Activated CD4-positive, alpha-beta T cell treated with anti-CD3 and anti-CD28 coated beads for 36 hours (primary cell): ENCODE measurements at regions of chr21 and their contacts with region 1.

Region 1: DNA sequence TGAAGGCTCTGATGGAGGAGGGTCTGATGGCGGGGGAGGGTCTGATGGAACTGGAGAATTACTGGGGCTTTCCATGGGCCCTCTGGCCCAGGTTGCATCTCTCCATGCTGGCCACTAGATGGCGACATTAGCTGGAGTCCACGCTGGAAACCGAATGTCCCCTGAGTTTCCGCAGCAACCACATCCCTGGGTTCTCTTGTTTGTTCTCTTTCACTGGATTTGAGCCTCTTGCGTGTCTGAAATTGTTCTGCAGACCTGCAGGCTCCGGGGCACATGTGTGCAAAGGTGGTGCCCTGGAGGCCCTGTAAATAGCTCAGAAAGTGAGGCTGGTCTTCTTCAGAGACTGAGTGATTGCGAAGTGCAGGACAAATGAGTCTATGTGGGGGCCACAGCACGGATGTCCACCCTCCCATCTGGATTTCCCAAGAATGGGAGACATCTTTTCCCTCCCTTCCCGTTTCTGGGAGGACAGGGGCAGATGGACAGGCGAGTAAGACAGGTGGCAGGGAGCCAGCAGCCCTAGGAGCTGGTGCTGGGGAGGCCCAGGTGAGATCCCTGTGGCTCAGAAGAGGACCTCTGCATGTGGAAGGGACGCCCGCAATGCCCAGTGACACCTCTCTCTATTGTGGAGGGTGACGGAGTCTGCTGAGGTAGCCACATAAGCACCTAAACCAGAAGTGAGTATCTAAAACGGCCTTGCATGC is 73.2 kb upstream of the ABCG1 start:
- DNase-seq: peak; percentile 80
- ATAC-seq: peak; percentile 81
- H3K4me3 Mint-ChIP-seq: no peak overlapping the region
- H3K27ac Mint-ChIP-seq: peak overlapping the region; percentile 38
- H3K4me1 Mint-ChIP-seq: peaks cover 10% of the 10 kb centered on the region
- H3K27me3 Mint-ChIP-seq: peaks cover 2% of the 10 kb centered on the region

Region 2: DNA sequence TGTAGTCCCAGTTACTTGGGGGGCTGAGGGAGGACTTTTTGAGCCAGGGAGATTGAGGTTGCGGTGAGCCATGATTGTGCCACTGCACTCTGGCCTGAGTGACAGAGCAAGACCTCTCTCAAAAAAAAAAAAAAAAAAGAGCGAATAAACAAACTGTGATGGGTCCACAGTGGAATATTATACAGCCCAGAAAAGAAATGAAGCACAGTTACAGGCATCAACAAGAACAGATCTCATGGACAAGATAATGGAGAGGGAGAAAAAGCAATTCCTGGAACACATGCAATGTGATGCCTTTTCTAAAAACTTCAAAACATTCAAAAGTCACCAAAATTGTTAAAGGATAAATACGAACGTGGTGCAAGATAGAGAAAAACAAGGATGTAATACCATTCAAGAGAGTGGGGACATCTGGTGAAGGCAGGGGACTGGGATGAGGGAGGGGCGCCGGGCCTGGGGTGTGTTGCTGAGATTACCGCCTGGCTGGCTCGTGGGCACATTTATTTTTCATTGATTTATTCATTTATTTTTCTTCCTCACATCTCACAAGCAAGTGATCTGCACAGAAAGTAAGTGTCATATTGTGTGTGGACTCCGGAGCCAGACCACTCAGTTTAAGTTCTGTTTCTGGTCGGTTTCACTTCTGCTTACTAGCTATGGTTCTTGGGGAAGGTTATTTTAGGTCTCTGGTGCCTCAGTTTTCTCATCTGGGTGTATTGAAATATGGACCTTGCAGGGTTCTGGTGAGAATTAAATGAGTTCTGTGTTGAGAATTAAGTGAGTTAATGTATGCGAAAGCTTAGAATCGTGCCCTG is 103.3 kb after region 1 on chr21:
- CTCF ChIA-PET with region 1: interaction called, 10 read pairs
- POLR2A ChIA-PET with region 1: no interaction called
- intact Hi-C with region 1: no loop called
- DNase-seq: no peak
- ATAC-seq: no peak
- H3K4me3 Mint-ChIP-seq: no peak overlapping the region
- H3K27ac Mint-ChIP-seq: no peak overlapping the region
- H3K4me1 Mint-ChIP-seq: peaks cover 17% of the 10 kb centered on the region
- H3K27me3 Mint-ChIP-seq: no peaks in the 10 kb centered on the region

Region 3: GRCh38 chr21:42266971-42267556 is 121.3 kb after region 1 on chr21:
- CTCF ChIA-PET with region 1: interaction called, 13 read pairs
- POLR2A ChIA-PET with region 1: no interaction called
- intact Hi-C with region 1: no loop called
- DNase-seq: no peak
- ATAC-seq: no peak
- H3K4me3 Mint-ChIP-seq: no peak overlapping the region
- H3K27ac Mint-ChIP-seq: peak overlapping the region; percentile 52
- H3K4me1 Mint-ChIP-seq: peaks cover 31% of the 10 kb centered on the region
- H3K27me3 Mint-ChIP-seq: no peaks in the 10 kb centered on the region

Region 4: DNA sequence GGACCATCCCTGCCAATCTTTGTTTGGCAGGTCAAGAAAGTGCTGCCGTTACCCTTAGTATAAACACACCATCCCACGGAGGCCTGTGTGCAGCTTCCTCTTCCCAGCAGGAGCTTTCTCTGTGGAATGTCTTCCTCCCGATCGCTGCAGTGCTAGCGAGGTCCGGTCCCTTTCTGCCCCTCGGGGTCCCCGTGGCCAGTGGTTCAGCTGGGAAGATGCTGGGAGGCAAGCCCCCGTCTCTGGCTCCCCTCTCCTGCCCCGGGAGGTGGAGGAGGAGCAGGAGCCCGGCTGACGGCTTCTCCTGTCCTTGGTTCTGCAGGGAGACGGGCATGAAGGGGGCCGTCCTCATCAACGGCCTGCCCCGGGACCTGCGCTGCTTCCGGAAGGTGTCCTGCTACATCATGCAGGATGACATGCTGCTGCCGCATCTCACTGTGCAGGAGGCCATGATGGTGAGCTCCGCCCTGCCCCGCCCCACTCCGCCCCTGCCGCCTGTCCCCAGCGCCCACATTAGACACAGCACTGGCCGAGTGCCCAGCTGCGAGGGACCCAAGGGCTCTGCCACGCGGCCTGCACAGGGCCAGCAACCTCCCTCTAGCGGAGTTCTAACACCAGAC is 127.4 kb after region 1 on chr21:
- CTCF ChIA-PET with region 1: interaction called, 13 read pairs
- POLR2A ChIA-PET with region 1: no interaction called
- intact Hi-C with region 1: no loop called
- DNase-seq: no peak
- ATAC-seq: no peak
- H3K4me3 Mint-ChIP-seq: no peak overlapping the region
- H3K27ac Mint-ChIP-seq: no peak overlapping the region
- H3K4me1 Mint-ChIP-seq: peaks cover 13% of the 10 kb centered on the region
- H3K27me3 Mint-ChIP-seq: no peaks in the 10 kb centered on the region

Region 5: GRCh38 chr21:42289926-42290325 is 144.2 kb after region 1 on chr21:
- CTCF ChIA-PET with region 1: interaction called, 13 read pairs
- POLR2A ChIA-PET with region 1: no interaction called
- intact Hi-C with region 1: no loop called
- DNase-seq: no peak
- ATAC-seq: no peak
- H3K4me3 Mint-ChIP-seq: no peak overlapping the region
- H3K27ac Mint-ChIP-seq: no peak overlapping the region
- H3K4me1 Mint-ChIP-seq: no peaks in the 10 kb centered on the region
- H3K27me3 Mint-ChIP-seq: no peaks in the 10 kb centered on the region

Region 6: DNA sequence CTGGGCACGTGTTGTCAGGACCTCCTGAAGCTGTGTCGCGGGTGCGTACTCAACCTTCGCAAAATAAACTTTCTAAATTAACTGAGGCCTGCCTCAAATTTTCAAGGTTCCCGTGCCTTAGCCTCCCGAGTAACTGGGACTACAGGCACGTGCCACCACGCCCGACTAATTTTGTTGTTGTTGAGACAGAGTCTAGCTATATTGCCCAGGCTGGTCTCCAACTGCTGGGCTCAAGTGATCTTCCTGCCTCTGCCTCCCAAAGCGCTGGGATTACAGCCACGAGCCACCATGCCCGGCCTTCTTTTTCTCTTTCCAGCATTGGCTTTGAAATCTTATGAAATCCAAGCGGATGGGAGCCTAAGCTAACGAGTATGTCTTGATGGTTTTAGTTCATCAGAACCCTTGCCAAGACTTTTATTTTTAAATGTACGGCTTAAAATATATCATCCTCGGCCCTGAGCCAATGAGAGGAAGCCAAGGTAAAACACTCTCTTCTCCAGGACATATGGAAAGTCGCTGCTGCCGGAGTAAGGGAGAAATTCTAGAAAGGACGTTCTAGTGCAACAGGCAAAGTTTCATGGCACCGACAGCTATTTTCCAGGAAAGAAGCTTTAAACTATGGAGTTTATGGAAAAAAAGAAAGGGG is 792.4 kb after region 1 on chr21:
- CTCF ChIA-PET with region 1: no interaction called
- POLR2A ChIA-PET with region 1: no interaction called
- intact Hi-C with region 1: no loop called
- DNase-seq: no peak
- ATAC-seq: no peak
- H3K4me3 Mint-ChIP-seq: no peak overlapping the region
- H3K27ac Mint-ChIP-seq: no peak overlapping the region
- H3K4me1 Mint-ChIP-seq: no peaks in the 10 kb centered on the region
- H3K27me3 Mint-ChIP-seq: no peaks in the 10 kb centered on the region